ENCODE measurements at regions of chr7 and their contacts with region 1.

Region 1: DNA sequence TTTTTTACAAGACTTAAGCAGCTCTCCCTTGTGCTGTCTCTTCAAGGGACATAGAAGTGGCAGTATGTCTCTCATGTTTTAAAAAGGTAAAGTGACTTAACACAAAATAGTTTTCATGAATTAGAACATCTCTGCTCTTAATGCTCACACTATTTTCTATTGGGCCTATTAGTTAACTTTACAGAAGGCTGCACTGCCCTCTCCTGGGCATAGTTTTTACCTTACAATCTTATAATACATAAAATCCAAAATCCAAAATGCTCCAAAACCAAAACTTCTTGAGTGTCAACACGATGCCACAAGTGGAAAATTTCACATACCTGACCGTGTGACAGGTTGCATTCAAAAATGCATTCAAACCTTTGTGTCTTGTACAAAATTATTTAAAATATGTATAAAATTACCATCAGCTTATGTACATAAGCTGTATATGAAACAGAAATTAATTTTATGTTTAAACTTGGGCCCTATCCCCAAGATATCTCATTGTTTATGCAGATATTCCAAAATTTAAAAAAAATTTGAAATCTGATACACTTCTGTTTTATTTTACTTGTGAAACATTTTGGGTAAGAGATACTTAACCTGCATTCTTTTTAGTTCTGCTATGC is 25.8 kb downstream of the TES start:
- DNase-seq: peak; percentile 29
- CTCF ChIP-seq: peak; percentile 36

Region 2: GRCh38 chr7:116111475-116111874 is 124.7 kb before region 1 on chr7:
- CTCF ChIA-PET with region 1: no interaction called
- POLR2A ChIA-PET with region 1: no interaction called
- DNase-seq: no peak
- CTCF ChIP-seq: no peak

Region 3: DNA sequence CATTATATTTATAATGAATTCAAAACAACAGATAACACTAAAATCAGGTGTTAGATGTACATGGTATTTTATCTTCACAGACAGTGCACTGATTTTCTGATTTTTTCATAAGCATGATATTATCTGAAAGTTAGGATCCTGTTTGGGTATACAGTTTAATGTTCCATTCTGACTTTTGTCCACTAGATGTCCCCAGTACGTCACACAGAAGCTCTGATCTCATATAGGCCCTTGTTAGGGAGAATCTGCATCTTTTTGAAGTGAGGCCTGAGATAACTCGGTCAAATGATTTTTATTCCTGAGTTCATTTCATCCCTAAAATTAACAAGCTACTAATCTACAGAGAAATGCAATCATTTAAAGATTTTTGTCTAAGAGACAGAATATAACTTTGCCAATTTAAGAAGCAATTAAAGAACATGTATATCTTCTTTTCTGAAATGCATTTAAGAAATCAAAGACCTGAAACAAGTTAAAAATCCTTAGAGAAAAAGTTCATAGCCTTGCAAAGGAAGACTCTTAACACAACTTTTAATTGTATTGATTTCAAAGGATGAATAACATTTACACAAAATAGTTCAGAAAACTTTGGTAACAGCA is 97.8 kb before region 1 on chr7:
- CTCF ChIA-PET with region 1: interaction called, 22 read pairs
- POLR2A ChIA-PET with region 1: no interaction called
- DNase-seq: peak; percentile 37
- CTCF ChIP-seq: peak; percentile 69

Region 4: GRCh38 chr7:116165717-116166116 is 70.4 kb before region 1 on chr7:
- CTCF ChIA-PET with region 1: interaction called, 67 read pairs
- POLR2A ChIA-PET with region 1: no interaction called
- DNase-seq: peak; percentile 29
- CTCF ChIP-seq: no peak

Region 5: GRCh38 chr7:116180302-116180701 is 55.8 kb before region 1 on chr7:
- CTCF ChIA-PET with region 1: interaction called, 345 read pairs
- POLR2A ChIA-PET with region 1: interaction called, 3 read pairs
- DNase-seq: peak; percentile 59
- CTCF ChIP-seq: peak; percentile 70

Region 6: GRCh38 chr7:116218051-116218645 is 18.0 kb before region 1 on chr7:
- CTCF ChIA-PET with region 1: interaction called, 64 read pairs
- POLR2A ChIA-PET with region 1: no interaction called
- DNase-seq: no peak
- CTCF ChIP-seq: no peak

Region 7: GRCh38 chr7:116249708-116250553 is 13.8 kb after region 1 on chr7:
- CTCF ChIA-PET with region 1: interaction called, 22 read pairs
- POLR2A ChIA-PET with region 1: no interaction called
- DNase-seq: no peak
- CTCF ChIP-seq: peak; percentile 12

Region 8: GRCh38 chr7:116367221-116367813 is 131.2 kb after region 1 on chr7:
- CTCF ChIA-PET with region 1: no interaction called
- POLR2A ChIA-PET with region 1: no interaction called
- DNase-seq: no peak
- CTCF ChIP-seq: no peak

Measured in GM10248 (cell line).